HCT116 (cell line): ENCODE measurements at regions of chr13 and their contacts with region 1.

Region 1: GRCh38 chr13:45925151-45925550 is 73.6 kb upstream of the SIAH3 start:
- DNase-seq: no peak
- ATAC-seq: peak; percentile 58
- H3K4me3 ChIP-seq: no peak overlapping the region
- H3K27ac ChIP-seq: no peak overlapping the region
- H3K4me1 ChIP-seq: no peaks in the 10 kb centered on the region
- H3K27me3 ChIP-seq: no peaks in the 10 kb centered on the region
- CTCF ChIP-seq: peak in 2 of 3 experiments; percentile 17 to 30; a peak in 2 of 6 replicates
- POLR2A ChIP-seq: no peak
- RAD21 ChIP-seq: peak; percentile 35; the same call in 1 of the 2 replicates

Region 2: GRCh38 chr13:45826731-45827130 is 98.4 kb before region 1 on chr13:
- CTCF ChIA-PET with region 1: no interaction called
- POLR2A ChIA-PET with region 1: no interaction called
- RAD21 ChIA-PET with region 1: no interaction called
- intact Hi-C with region 1: no loop called
- DNase-seq: no peak
- ATAC-seq: no peak
- H3K4me3 ChIP-seq: no peak overlapping the region
- H3K27ac ChIP-seq: no peak overlapping the region
- H3K4me1 ChIP-seq: no peaks in the 10 kb centered on the region
- H3K27me3 ChIP-seq: no peaks in the 10 kb centered on the region
- CTCF ChIP-seq: no peak
- POLR2A ChIP-seq: no peak
- RAD21 ChIP-seq: no peak

Region 3: DNA sequence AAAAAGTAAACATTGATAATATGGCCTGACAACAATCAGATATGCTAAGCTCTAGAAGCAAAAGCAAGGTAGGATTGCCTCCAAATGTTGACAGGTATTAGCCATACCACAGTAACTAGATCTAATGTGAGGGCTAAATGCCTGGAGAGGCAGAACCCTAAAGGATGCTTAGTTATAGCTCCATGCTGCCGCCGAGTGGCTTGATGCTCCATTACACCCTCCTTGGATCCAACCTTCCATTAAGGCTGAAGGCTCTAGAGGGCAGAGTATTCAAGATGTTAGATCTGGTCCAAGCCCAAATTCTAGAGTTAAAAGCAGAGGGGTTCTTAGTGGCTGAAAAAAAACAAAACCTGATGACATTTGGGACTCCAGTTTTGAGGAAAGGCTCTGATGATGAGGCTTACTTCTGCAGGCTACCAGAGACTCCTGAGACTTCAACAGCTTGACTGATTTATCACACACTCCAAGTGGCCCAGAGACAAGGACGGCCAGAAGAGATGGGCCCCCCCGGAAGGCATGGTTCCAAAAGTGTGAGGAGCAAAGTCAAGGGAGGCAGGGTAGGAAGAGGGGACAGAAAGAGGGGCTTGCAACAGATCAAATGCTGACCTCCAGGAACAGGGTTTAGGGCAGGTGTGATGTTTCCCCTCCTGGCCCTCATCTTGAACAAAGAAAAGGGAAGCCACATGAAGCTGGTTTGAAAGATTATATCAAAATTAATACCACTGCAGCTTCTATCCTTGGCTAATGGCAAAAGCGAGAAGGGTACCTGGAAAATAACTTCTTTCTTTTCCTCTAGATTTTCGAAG is 201.6 kb after region 1 on chr13:
- CTCF ChIA-PET with region 1: no interaction called
- POLR2A ChIA-PET with region 1: no interaction called
- RAD21 ChIA-PET with region 1: no interaction called
- intact Hi-C with region 1: loop called (anchors 10 kb)
- DNase-seq: peak; percentile 57
- ATAC-seq: peak; percentile 100
- H3K4me3 ChIP-seq: no peak overlapping the region
- H3K27ac ChIP-seq: no peak overlapping the region
- H3K4me1 ChIP-seq: no peaks in the 10 kb centered on the region
- H3K27me3 ChIP-seq: peaks cover 30% of the 10 kb centered on the region
- CTCF ChIP-seq: peak; percentile 86 to 97 (median 93)
- POLR2A ChIP-seq: no peak
- RAD21 ChIP-seq: peak; percentile 89